ENCODE measurements at regions of chr10 and their contacts with region 1.

Region 1: DNA sequence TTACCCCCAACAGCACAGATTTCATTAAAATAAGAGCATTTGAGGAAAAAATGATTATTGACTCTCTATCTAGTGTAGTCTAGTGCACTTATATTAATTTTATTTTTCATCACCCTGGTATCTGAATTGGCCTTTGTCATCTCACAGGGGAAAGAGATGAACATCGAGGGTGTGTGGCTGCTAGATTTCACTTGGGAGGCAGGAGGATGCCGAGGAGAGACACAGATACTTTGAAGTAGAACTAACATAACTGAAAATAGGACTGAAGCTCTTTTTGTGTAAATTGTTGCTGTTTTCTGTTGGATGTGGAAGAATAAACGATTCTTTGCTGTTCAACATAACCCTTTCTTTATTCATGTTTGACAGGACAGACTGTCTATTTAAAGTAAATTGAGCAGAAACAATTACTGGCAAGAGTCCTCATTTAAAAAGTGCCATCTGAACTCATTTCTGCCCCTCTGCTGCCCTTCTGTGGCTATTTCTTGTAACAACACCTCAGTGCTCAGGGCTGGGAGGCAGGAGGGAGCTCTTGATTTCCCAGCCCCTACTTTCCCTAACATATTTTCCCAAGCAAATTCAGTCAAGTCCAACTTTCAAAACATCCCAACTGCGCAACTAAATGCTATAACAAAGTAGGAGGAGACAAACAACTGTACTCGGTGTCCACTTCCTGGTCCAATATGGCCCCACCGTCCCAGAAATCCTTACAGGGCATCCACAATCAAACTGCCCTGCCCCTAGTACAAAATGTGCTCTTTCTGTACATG is 15.6 kb downstream of the LYZL1 start:
- DNase-seq: peak in 1 of 2 donors; percentile 81
- H3K4me3 ChIP-seq: no peak overlapping the region
- H3K27ac ChIP-seq: no peak overlapping the region
- H3K4me1 ChIP-seq: peaks cover 0 to 3% of the 10 kb centered on the region in 2 donors
- H3K27me3 ChIP-seq: no peaks in the 10 kb centered on the region
- CTCF ChIP-seq: peak; percentile 78 to 84 (median 80)

Region 2: DNA sequence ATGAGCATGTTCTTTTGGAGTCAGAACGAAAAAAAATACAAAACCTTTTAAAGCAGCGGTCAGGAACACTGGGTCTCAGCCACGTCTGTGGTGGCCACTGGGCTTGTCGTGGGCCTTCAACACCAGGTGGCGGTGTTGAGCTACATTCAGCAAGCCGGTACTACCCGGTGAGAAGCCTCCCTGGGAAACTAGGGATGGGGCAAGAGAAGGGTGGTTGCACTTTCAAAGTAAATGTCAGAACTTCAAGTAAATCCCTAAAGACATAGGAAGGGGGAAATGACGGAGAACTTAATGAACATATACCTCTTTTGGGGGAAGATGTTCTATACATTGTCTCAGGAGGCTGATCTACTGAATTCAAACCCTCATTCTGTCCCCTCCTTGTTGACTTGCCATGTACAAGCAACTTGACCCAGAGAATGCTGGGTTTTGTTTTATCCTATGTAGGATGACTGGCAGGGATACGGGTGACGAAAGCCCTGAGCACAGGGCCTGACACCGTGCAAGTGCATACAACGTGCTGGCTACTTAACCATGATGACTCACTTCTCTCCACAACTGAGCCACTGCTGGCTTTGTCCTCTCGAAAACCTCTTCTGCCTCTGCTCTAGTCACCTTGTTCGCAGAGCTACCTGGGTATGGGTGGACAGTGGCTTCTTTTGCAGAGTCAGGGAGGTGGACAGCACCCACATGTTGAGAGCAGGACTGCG is 676.1 kb before region 1 on chr10:
- intact Hi-C with region 1: loop called (anchors 1 kb)
- DNase-seq: peak in 1 of 2 donors; percentile 86
- H3K4me3 ChIP-seq: no peak overlapping the region
- H3K27ac ChIP-seq: no peak overlapping the region
- H3K4me1 ChIP-seq: peaks cover 0 to 8% of the 10 kb centered on the region in 2 donors
- H3K27me3 ChIP-seq: no peaks in the 10 kb centered on the region
- CTCF ChIP-seq: peak; percentile 73 to 89 (median 86)

Region 3: GRCh38 chr10:28663576-28664313 is 640.7 kb before region 1 on chr10:
- intact Hi-C with region 1: loop called (anchors 1 kb)
- DNase-seq: peak; percentile 21 to 87
- H3K4me3 ChIP-seq: no peak overlapping the region
- H3K27ac ChIP-seq: peak overlapping the region; percentile 47 to 62
- H3K4me1 ChIP-seq: peaks cover 0 to 5% of the 10 kb centered on the region in 2 donors
- H3K27me3 ChIP-seq: no peaks in the 10 kb centered on the region
- CTCF ChIP-seq: peak; percentile 88 to 98 (median 97)